ENCODE measurements at regions of chr13 and their contacts with region 1.

Region 1: GRCh38 chr13:86757236-86757978 is 913.8 kb upstream of the SLITRK5 start:
- DNase-seq: no peak
- H3K4me3 ChIP-seq: no peak overlapping the region
- H3K27ac ChIP-seq: no peak overlapping the region
- H3K4me1 ChIP-seq: no peaks in the 10 kb centered on the region
- CTCF ChIP-seq: no peak

Region 2: DNA sequence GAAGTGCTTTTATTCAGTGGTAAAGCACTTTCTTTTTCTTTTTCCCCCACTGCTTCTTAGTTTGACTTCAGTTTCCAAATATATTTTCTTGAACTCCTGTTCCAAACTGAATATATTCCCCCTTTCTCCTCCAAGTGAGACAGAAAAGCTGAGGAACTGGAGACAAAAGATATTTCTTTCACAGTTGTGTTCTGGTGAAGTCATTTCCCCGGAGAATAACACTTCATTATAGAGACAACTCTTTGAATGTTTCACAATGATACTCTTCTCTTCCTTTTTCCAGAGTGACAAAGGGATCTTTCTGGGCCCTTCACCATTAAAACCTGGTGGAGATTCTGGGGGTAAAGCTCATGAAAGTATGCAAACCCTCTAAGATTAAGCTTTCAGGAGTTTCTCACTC is 53.0 kb after region 1 on chr13:
- CTCF ChIA-PET with region 1: no interaction called
- POLR2A ChIA-PET with region 1: no interaction called
- intact Hi-C with region 1: loop called (anchors 5 kb)
- DNase-seq: no peak
- H3K4me3 ChIP-seq: no peak overlapping the region
- H3K27ac ChIP-seq: no peak overlapping the region
- H3K4me1 ChIP-seq: no peaks in the 10 kb centered on the region
- CTCF ChIP-seq: no peak

Region 3: DNA sequence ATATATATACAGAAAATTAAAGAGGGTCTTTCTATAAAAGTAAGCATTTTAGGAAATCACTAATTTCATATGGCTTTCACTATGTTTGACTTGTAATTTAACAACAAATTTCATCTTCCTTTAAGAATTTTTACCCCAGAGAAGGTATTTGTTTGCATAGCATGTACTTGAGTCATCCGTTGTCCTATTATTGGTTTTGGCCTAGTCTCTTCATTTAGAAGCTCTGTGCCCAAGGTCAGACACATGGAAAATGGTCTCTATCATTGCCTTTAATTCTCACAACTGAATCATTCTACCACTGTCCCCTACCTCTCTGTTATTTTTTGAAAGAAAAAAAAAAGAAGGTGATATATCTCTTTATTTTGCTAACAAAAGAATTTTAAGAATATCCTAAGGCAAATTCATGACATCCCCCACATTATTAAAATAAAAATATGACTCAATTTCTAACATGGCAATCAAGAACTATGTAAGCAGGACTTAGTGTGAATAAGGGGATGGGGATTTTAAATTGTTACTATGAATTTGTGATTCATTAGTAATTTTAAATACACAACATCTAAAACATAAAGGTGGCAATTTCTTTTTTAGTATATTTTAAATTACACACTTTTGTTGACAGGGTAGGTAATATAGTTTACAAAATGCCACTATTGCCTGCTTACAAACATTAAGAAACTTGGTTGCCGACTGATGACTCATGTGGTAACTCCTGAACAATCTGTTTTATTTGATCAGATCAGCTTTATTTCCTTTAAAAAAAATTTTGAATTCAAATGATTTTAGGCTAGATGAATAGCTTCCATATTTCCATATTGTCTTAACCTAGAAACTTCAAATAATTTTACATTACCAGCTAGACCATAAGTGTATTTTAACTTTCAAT is 927.7 kb after region 1 on chr13:
- CTCF ChIA-PET with region 1: no interaction called
- POLR2A ChIA-PET with region 1: no interaction called
- intact Hi-C with region 1: no loop called
- DNase-seq: no peak
- H3K4me3 ChIP-seq: no peak overlapping the region
- H3K27ac ChIP-seq: no peak overlapping the region
- H3K4me1 ChIP-seq: peaks cover 29% of the 10 kb centered on the region
- CTCF ChIP-seq: no peak